ENCODE measurements at regions of chr14 and their contacts with region 1.

Region 1: DNA sequence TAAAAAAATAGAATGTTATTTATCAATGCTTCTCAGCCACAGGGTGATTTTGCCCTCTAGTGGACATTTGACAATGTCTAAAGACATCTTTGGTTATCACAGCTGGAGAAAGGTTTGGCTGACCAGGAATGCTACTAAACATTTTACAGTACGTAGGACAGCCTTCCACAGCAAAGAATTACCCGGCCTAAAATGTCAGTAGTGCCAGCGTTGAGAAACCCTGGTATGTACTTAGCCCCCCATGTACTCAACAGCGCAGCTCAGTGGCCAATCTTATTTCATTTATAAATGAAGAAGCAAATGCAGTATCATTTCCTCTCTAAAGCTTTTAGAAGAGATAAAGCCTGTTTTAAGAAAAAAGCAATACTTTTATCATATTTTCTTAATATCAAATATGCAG is 5.8 kb downstream of the MARK3 start:
- DNase-seq: peak; percentile 49
- H3K4me3 ChIP-seq: no peak overlapping the region
- H3K27ac ChIP-seq: no peak overlapping the region
- H3K27me3 ChIP-seq: no peaks in the 10 kb centered on the region
- CTCF ChIP-seq: peak; percentile 76

Region 2: GRCh38 chr14:103361868-103362267 is 29.2 kb before region 1 on chr14:
- CTCF ChIA-PET with region 1: interaction called, 14 read pairs
- POLR2A ChIA-PET with region 1: no interaction called
- DNase-seq: peak; percentile 85
- H3K4me3 ChIP-seq: no peak overlapping the region
- H3K27ac ChIP-seq: peak overlapping the region; percentile 82
- H3K27me3 ChIP-seq: no peaks in the 10 kb centered on the region
- CTCF ChIP-seq: no peak

Region 3: GRCh38 chr14:103378038-103378854 is 12.8 kb before region 1 on chr14:
- CTCF ChIA-PET with region 1: interaction called, 35 read pairs
- POLR2A ChIA-PET with region 1: no interaction called
- DNase-seq: no peak
- H3K4me3 ChIP-seq: no peak overlapping the region
- H3K27ac ChIP-seq: no peak overlapping the region
- H3K27me3 ChIP-seq: no peaks in the 10 kb centered on the region
- CTCF ChIP-seq: no peak

Region 4: DNA sequence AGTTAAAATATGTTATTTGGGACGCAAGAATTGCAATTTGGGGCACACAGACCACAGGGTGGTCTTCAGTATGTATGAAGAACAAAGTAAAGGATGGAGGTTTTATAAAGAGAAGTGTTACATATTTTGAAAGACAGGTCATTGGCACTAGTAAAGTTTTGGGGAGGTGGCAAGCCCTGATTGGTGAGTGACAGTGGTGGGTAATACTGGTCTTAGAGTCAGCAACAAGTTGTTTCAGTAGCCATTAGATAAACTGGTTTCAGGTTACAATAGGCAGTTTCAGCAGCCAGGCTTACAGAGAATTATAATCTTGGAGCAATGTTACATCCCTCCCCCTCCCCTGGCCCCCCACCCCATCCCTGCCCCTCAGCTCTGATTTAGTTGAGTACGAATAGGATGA is 11.6 kb after region 1 on chr14:
- CTCF ChIA-PET with region 1: interaction called, 19 read pairs
- POLR2A ChIA-PET with region 1: no interaction called
- DNase-seq: no peak
- H3K4me3 ChIP-seq: no peak overlapping the region
- H3K27ac ChIP-seq: no peak overlapping the region
- H3K27me3 ChIP-seq: no peaks in the 10 kb centered on the region
- CTCF ChIP-seq: no peak

Region 5: GRCh38 chr14:103418481-103418818 is 27.4 kb after region 1 on chr14:
- CTCF ChIA-PET with region 1: interaction called, 13 read pairs
- POLR2A ChIA-PET with region 1: interaction called, 4 read pairs
- DNase-seq: no peak
- H3K4me3 ChIP-seq: no peak overlapping the region
- H3K27ac ChIP-seq: peak overlapping the region; percentile 66
- H3K27me3 ChIP-seq: no peaks in the 10 kb centered on the region
- CTCF ChIP-seq: no peak

Region 6: DNA sequence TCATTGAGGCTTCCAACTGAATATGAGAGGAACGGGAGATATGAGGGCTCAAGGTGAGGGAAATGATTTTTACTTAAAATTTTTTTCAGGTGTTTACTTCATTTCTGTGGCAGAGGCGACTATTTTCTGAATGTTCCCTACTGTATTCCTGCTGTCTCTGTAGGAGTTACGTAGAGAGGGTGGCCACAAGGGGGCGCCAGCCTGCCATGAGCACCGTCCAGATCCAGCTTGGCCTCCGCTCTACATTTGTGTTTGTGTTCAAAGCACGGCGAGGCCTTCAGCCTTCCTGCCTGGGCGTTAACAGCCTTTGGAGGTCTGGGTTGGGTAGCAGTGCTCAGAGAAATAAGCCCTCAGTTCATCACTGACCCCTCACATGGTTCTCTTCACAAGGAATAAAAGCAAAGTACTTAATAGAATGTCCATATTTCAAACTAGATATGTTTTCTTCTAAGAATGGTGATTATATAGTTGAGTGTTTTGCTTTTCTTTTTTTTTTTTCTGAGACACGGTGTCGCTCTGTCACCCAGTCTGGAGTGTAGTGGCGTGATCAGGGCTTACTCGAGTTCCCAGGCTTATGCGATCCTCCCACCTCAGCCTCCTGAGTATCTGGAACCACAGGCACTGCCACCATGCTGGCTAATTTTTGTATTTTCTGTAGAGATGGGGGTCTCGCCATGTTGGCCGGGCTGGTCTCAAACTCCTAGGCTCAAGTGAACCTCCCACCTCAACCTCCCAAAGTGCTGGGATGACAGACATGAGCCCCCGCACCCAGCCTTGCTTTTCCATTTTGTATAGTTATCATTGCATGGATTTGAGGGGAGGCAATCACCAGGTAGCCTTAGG is 109.3 kb after region 1 on chr14:
- CTCF ChIA-PET with region 1: interaction called, 11 read pairs
- POLR2A ChIA-PET with region 1: no interaction called
- DNase-seq: peak; percentile 66
- H3K4me3 ChIP-seq: no peak overlapping the region
- H3K27ac ChIP-seq: no peak overlapping the region
- H3K27me3 ChIP-seq: no peaks in the 10 kb centered on the region
- CTCF ChIP-seq: peak; percentile 98